ENCODE measurements at regions of chr2 and their contacts with region 1.

Region 1: DNA sequence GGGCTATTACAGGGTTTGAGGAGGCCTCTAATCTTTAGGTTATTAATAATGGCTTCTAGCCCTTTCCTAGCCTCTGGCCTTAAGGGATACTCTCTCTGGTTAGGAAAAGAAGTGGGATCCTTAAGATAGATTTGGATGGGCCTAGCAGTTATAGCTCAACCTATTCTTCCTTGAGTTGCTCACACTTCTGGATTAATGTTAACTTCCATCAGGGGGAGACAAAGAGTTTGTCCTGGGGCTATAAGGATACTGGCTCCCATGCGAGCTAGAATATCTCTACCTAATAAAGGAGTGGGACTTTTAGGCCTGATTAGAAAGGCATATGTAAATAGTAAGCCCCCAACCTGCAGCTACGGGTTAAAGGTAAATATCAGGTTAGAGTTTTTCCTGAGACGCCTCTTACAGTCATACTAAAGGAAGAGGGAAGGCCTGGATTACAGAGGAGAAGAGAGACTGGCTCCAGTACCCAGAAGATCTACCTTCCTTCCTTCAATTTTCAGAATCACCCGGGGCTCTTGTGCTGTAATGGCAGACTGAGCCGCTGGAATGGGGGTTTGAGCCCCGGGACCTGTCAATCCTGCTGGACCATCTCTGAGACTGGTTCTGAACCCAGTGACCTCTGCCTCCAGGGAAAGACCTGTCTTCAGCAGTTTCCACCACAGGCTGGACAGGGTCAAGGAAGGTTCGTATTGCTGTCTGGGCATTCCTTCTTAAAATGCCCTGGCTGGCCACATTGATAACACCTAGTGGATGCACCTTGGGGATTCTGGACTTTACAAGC is 14.1 kb upstream of the PTH2R start:
- H3K4me3 ChIP-seq: no peak overlapping the region
- H3K27ac ChIP-seq: no peak overlapping the region
- H3K4me1 ChIP-seq: no peaks in the 10 kb centered on the region
- CTCF ChIP-seq: no peak

Region 2: DNA sequence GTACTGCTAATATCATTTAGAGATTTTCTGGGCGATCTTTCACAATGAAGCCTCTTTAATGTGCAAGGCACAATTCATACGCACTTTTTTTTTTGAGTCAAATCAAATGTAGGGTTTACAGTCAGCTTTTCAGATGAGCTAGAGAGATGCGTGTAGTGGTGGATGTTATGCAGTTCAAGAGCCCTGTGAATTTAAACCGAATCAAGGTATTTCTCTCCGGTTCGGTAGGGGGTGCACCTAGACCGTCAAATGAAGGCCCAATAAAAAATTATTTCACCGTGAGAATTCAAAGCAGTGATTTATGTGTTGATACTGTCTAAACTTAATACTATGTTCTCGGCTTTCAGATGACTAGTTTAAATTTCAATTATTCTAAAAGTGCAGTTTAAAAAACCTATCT is 15.2 kb after region 1 on chr2:
- CTCF ChIA-PET with region 1: interaction called, 10 read pairs
- POLR2A ChIA-PET with region 1: no interaction called
- H3K4me3 ChIP-seq: no peak overlapping the region
- H3K27ac ChIP-seq: no peak overlapping the region
- H3K4me1 ChIP-seq: peaks cover 2% of the 10 kb centered on the region; the same call in 1 of the 2 replicates
- CTCF ChIP-seq: no peak

Measured in HEK293 (cell line).